CD8-positive, alpha-beta T cell (primary cell): ENCODE measurements at regions of chr1 and their contacts with region 1.

Region 1: DNA sequence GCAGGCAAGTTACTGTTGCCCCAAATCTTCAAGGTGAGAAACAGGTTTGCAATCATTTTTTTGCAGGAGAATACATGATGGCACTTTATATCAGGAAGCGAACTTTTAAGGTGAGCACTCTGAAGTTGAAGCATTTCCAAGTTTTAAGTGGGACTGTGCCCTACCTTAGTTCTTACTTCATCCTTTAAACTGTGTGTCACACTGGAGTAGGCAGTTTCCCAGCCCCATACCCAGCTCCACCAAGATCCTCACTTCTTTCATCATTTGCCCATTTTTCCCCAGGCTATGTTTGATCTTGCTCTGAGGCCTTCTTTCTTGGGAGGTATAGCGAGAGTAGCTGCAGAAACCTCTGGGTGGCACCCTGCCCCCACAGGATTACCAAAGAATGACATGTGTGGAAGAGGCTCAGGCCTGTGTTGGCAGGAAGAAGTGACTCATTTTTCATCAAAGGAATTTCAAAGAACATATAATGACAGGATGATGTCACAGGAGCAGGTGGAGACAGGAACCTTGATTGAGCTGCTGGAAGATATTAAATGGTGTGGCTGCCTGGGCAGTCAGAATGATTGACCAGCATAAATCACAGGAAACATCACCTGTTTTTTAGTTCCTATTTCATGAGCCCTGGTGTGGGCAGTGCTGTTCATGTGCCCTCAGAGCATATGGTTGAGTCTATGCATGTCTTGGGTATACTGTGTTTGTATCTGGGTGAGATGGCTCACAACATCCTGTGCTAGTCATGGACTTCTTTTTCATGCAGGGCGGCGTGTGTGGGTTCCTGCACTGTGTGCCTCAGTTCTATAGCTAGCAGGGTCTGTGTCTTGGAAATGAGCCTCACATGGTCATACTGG is 20.8 kb upstream of the MACF1 start:
- DNase-seq: peak; percentile 60 to 93 (median 83)
- ATAC-seq: peak; percentile 87
- H3K4me3 ChIP-seq: no peak overlapping the region
- H3K4me3 Mint-ChIP-seq: no peak overlapping the region
- H3K27ac ChIP-seq: peak overlapping the region; percentile 46 to 69
- H3K27ac Mint-ChIP-seq: peak overlapping the region; percentile 97
- H3K4me1 ChIP-seq: peaks cover 20% of the 10 kb centered on the region
- H3K4me1 Mint-ChIP-seq: peaks cover 34% of the 10 kb centered on the region
- H3K27me3 ChIP-seq: no peaks in the 10 kb centered on the region
- H3K27me3 Mint-ChIP-seq: no peaks in the 10 kb centered on the region
- CTCF ChIP-seq: peak; percentile 71

Region 2: GRCh38 chr1:39204441-39205081 is 20.8 kb after region 1 on chr1 and contains the start of gene MACF1:
- CTCF ChIA-PET with region 1: interaction called, 6 read pairs
- POLR2A ChIA-PET with region 1: interaction called, 4 read pairs
- intact Hi-C with region 1: loop called in 1 of 2 experiments (anchors 2 kb)
- DNase-seq: peak in 7 of 9 experiments; percentile 9 to 70 (median 44)
- ATAC-seq: peak; percentile 54
- H3K4me3 ChIP-seq: peak within 1 kb of the TSS; percentile 38 to 50
- H3K4me3 Mint-ChIP-seq: peak within 1 kb of the TSS; percentile 87
- H3K27ac ChIP-seq: peak within 1 kb of the TSS; percentile 38 to 81
- H3K27ac Mint-ChIP-seq: peak within 1 kb of the TSS; percentile 95
- H3K4me1 ChIP-seq: peaks cover 45% of the 10 kb centered on the region
- H3K4me1 Mint-ChIP-seq: peaks cover 64% of the 10 kb centered on the region
- H3K27me3 ChIP-seq: no peaks in the 10 kb centered on the region
- H3K27me3 Mint-ChIP-seq: no peaks in the 10 kb centered on the region
- CTCF ChIP-seq: no peak
- total RNA-seq, gene MACF1: 184 to 193 TPM

Region 3: DNA sequence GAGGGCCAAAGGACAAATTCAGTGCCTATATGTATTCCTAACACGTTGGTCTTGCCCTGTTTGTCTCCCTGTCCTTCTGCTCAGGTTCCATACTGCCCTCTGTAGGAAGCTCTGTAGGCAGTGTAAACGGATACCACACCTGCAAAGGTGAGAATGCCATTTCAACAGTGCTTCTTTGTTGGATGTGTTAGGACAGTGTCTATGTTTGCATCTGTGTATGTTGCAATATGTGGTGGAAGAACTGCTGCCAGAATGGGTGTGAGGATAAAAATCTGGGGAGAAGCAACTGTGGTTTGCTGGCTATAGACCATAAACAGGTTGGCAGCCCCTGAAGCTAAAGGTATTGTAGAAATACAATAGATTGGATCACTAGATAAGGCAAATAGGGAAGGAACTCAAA is 194.6 kb after region 1 on chr1:
- CTCF ChIA-PET with region 1: no interaction called
- POLR2A ChIA-PET with region 1: no interaction called
- intact Hi-C with region 1: loop called in 1 of 2 experiments (anchors 1 kb)
- DNase-seq: peak in 2 of 9 experiments; percentile 19 to 36
- ATAC-seq: no peak
- H3K4me3 ChIP-seq: no peak overlapping the region
- H3K4me3 Mint-ChIP-seq: no peak overlapping the region
- H3K27ac ChIP-seq: no peak overlapping the region
- H3K27ac Mint-ChIP-seq: peak overlapping the region; percentile 33
- H3K4me1 ChIP-seq: no peaks in the 10 kb centered on the region
- H3K4me1 Mint-ChIP-seq: no peaks in the 10 kb centered on the region
- H3K27me3 ChIP-seq: no peaks in the 10 kb centered on the region
- H3K27me3 Mint-ChIP-seq: no peaks in the 10 kb centered on the region
- CTCF ChIP-seq: no peak